HEK293T (cell line): ENCODE measurements at regions of chr13 and their contacts with region 1.

Region 1: GRCh38 chr13:23541221-23541824 is 28.9 kb upstream of the TNFRSF19 start:
- DNase-seq: no peak

Region 2: GRCh38 chr13:23411706-23412105 is 129.6 kb before region 1 on chr13:
- CTCF ChIA-PET with region 1: no interaction called
- POLR2A ChIA-PET with region 1: no interaction called
- DNase-seq: no peak

Region 3: DNA sequence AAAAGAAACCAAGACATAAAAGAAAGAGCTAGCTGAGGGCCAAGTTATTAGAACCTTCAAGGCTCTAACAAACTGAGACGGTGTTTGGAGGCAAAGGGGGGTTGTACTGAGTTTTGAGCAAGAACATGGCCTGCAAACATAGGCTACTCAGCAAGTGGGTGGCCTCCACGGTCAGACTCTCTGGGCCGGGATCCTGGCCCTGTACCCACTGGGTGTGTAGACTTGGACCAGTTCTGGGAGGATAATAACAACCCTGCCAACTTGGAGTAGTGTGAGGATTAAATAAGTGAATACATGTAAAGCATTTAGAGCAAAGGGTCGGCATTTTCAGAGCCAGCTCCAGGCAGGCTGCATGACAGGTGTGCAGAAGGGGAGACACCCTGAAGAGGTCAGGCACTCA is 27.2 kb before region 1 on chr13:
- CTCF ChIA-PET with region 1: interaction called, 10 read pairs
- POLR2A ChIA-PET with region 1: no interaction called
- DNase-seq: no peak

Region 4: GRCh38 chr13:23557733-23558132 is 16.4 kb after region 1 on chr13:
- CTCF ChIA-PET with region 1: no interaction called
- POLR2A ChIA-PET with region 1: no interaction called
- DNase-seq: no peak

Region 5: DNA sequence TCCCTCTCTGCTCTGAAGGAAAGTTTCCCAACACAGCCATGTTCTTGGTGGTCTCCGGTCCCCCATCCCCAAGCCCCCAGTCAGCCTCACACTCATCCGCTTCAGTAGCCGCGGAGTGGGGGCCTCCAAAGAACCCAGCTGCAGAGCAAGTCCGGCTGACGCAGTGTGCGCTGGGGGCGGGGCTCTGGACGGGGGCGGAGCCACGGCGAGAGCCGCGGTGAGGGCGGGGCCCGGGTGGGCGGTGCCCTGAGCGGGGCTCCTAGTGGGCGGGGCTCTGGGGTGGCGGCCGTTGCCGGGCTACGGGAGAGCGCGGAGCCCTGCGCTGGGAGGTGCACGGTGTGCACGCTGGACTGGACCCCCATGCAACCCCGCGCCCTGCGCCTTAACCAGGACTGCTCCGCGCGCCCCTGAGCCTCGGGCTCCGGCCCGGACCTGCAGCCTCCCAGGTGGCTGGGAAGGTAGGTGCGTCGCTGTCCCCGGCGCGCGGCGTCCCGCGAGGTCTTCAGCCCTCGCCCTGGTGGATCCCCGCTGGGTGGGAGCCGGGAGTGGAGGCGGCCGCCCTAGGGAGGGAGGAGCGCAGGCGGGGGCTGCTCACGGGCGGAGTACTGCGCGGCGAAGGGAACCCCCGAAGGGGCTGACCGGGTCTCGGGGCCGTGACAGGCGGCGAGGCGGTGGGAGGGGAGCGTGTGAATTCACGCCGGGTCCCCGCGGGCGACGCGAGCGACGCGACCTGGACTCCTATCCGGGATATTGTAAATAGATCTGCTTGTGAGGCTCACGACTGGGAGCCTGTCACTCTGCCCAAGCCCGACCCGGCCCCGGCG is 38.0 kb after region 1 on chr13:
- CTCF ChIA-PET with region 1: no interaction called
- POLR2A ChIA-PET with region 1: no interaction called
- DNase-seq: peak; percentile 86